ENCODE measurements at regions of chr10 and their contacts with region 1.

Region 1: DNA sequence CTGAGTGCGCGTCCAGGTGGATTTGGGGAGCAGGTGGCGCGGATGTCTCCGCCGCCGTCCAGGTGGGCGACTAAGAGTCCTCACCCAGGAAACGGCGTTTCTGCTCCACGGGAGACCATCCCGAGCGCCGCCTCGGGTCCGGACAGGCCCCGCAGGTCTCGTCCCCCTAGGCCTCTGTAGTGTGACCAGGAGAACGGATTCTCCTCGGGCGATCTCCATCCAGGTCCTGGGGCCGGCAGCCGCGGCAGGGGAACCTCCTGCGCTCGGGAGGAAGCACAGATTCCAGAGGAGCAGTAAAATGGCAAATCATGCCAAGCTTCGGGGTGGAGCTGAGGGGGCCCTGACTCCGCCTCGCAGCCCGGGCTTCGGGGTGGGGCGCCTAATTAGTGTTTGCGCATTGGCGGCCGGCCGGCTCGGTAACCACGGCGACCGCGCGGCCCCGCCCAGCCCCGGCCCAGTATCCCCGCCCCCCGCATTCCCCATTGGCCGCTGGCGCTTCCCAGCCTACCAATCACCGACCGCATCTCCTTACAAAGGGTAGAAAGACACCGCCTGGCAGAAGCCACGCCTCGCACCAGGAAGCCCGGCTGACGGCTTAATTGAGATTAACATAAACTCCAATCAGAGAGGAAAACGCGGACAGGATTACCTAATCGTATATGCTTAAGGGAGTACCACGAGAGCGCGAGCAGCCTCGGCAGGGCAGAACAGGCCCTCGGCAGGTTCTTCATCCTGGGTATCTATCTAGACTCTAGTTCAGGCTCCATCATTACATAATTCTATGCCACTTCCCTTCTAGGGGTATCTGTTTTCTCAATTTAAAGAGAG is 168.6 kb downstream of the ARHGAP12 start:
- DNase-seq: peak; percentile 96 to 98 (median 98)
- ATAC-seq: peak; percentile 96 to 98
- H3K4me3 ChIP-seq: peak overlapping the region; percentile 82
- H3K27ac ChIP-seq: peak overlapping the region; percentile 95
- H3K4me1 ChIP-seq: peaks cover 15% of the 10 kb centered on the region
- H3K27me3 ChIP-seq: no peaks in the 10 kb centered on the region

Region 2: DNA sequence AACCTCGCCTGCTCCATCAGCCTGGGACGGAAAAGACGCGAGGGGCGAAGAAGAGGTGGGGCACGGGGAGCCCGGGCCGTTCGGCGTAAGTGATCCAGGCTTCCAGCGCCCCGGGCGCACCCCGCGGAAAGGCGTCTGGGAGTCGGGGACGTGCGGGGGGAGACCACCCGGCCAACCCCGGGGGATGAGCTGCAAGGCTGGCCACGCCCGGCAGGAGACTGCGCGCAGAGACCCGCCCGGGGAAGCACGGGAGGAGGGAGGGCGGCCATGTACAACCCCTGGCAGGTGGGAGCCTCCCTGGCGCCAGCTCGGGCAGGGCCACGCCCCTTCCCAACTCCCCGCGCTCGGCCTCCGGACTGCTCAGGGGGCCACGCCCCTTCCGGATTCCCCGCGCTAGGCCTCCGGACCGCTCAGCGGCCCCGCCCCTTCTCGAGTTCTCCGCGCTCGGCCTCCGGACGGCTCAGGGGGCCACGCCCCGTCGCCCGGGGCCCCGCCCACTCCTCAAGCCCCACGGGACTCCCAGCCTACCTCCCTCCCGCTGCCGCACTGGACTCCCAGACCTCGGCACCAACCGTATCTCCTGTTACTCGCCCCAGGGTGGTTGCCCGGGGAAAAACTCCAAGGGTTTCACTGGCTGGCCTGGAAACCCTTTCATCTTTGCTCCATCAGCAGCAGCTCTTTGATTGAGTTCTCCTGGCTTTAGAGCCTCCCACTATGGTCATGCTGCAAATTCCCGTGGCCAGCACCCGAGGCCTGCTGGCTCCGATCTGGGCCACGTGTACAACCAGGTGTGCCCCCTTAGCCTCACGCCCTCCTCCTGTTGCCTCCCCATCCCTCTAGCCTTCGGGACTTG is 156.6 kb before region 1 on chr10:
- intact Hi-C with region 1: loop called in 1 of 4 experiments (anchors 10 kb)
- DNase-seq: peak; percentile 98 to 99 (median 99)
- ATAC-seq: peak; percentile 96 to 97
- H3K4me3 ChIP-seq: peak overlapping the region; percentile 54
- H3K27ac ChIP-seq: peak overlapping the region; percentile 81
- H3K4me1 ChIP-seq: no peaks in the 10 kb centered on the region
- H3K27me3 ChIP-seq: no peaks in the 10 kb centered on the region

Region 3: DNA sequence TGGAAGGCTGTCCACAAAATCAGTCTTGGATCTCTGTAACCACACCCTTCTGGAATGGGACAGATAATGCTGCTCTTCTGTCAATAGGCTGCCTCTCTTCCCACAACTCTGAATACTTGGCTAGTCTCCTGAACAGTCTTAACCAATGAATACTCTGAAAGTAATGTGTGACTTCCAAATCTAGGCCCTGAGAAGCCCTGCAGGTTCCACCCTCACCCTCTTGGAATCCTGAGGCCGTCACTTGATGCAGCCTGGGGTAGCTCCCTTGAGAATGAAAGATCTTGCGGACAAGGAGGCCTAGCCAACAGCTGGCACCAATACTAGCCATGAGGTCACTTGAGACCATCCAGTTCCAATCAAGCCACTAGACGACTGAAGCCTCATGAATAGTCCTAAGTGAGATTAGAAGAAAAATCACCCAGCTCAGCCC is 59.4 kb after region 1 on chr10:
- intact Hi-C with region 1: no loop called
- DNase-seq: peak; percentile 50 to 75 (median 69)
- ATAC-seq: peak; percentile 73 to 78
- H3K4me3 ChIP-seq: no peak overlapping the region
- H3K27ac ChIP-seq: no peak overlapping the region
- H3K4me1 ChIP-seq: peaks cover 6% of the 10 kb centered on the region
- H3K27me3 ChIP-seq: no peaks in the 10 kb centered on the region